ENCODE measurements at regions of chr1 and their contacts with region 1.

Region 1: DNA sequence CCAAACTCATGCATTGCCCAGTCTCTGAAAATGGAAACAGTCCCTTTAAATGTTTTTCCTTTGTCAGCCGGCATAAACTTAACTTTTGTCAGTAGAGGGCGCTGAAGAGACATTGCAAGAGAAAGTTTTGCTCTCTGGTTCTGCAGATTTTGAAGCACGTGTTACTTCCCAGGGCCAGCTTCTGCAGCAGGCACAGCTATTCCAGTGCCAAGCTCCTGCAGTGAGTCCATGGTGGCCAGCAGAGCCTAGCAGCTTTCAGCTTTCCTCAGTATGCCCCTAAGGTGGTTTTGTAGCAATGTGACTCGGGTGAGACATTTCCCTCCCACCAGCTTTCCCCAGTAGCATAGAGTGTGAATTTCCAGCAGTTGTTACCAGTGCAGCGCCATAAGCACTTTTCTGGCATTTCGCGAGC is 2.6 kb upstream of the IFI44L start:
- DNase-seq: peak; percentile 73 to 80 (median 78)
- H3K4me3 ChIP-seq: no peak overlapping the region
- H3K4me3 Mint-ChIP-seq: peak overlapping the region in 6 of 8 donors; percentile 27 to 74 (median 40)
- H3K27ac ChIP-seq: no peak overlapping the region
- H3K27ac Mint-ChIP-seq: peak overlapping the region in 6 of 7 donors; percentile 24 to 88 (median 70)
- H3K4me1 ChIP-seq: peaks cover 43% of the 10 kb centered on the region
- H3K4me1 Mint-ChIP-seq: peaks cover 33 to 45% (median 39%) of the 10 kb centered on the region in 4 donors
- H3K27me3 ChIP-seq: no peaks in the 10 kb centered on the region
- H3K27me3 Mint-ChIP-seq: no peaks in the 10 kb centered on the region

Region 2: DNA sequence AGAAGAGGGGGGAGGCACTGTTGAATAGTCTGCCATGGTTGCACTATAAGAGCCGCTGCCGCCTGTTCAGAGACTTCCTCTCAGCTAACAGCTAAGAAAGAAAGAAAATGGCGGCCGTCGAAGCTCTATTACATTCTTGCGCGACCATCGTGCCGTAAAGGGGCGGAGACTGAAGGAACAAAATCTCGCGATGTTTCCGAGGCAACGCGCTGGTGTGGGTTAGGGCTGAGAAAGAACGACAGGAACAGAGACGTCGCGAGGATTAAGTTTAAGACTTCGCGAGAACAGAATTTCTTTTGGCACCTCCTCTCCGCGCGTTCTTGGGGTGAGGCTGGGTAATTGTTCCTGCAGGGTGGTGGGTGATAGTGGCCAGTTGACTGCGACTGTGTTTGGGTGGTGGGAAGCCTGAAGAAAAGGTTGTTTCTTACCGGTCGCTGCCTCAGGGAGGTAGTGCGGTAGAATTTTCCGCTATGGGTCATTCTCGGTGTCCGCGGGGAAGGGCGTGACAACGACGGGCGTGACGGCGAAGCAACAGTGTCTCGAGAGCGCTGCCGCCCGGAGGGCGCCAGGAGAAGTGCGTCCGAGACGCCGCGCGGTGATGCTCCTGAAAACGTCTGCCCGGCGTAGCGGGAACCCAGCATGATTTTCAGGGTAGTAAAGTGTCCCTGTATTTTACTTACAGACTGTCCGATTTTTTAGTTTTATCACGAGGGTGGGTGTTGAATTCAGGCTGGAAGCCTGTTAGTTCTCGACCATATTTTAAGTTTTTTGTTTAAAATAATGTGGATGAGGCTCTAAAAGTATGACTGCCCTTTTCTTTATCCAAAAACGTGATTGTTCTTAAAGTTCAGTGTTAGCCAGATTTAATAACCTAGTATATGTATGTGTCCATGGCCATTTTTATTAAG is 638.4 kb before region 1 on chr1 and contains the start of gene FUBP1:
- CTCF ChIA-PET with region 1: no interaction called
- POLR2A ChIA-PET with region 1: interaction called, 4 read pairs
- intact Hi-C with region 1: loop called (anchors 10 kb)
- DNase-seq: peak; percentile 95 to 98 (median 97)
- H3K4me3 ChIP-seq: peak within 1 kb of the TSS; percentile 74 to 94
- H3K4me3 Mint-ChIP-seq: no peak within 1 kb of the TSS
- H3K27ac ChIP-seq: peak within 1 kb of the TSS; percentile 100
- H3K27ac Mint-ChIP-seq: no peak within 1 kb of the TSS
- H3K4me1 ChIP-seq: peaks cover 55% of the 10 kb centered on the region
- H3K4me1 Mint-ChIP-seq: peaks cover 22 to 39% (median 30%) of the 10 kb centered on the region in 4 donors
- H3K27me3 ChIP-seq: no peaks in the 10 kb centered on the region
- H3K27me3 Mint-ChIP-seq: no peaks in the 10 kb centered on the region
- total RNA-seq, gene FUBP1: 246 to 270 TPM

Region 3: DNA sequence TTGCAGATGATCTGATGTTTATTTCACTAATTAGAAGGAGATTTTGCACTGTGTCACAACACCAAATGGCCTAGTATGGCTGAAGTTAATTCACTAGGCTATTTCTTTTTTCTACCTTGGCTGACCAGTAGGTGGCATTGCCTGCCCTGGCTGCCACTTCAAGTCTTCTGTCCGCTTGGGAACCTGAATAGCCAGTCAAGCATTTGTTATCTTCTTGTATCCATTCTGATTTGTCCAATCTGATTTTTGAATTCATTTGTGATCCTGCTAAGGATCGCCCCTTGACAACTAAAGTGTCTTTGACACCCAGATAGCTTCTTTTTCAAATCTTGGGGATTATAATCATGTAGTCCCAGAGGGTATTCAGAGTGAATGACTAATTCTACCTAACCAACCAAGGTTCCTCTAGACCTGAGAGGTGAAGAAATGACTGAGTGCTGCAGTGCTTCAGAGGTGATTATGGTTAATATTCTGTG is 472.5 kb before region 1 on chr1:
- CTCF ChIA-PET with region 1: interaction called, 6 read pairs
- POLR2A ChIA-PET with region 1: no interaction called
- intact Hi-C with region 1: loop called (anchors 5 kb)
- DNase-seq: peak in 4 of 5 donors; percentile 29 to 36 (median 32)
- H3K4me3 ChIP-seq: no peak overlapping the region
- H3K4me3 Mint-ChIP-seq: peak overlapping the region in 1 of 8 donors; percentile 50
- H3K27ac ChIP-seq: no peak overlapping the region
- H3K27ac Mint-ChIP-seq: no peak overlapping the region
- H3K4me1 ChIP-seq: peaks cover 11% of the 10 kb centered on the region
- H3K4me1 Mint-ChIP-seq: peaks cover 8 to 35% (median 12%) of the 10 kb centered on the region in 4 donors
- H3K27me3 ChIP-seq: no peaks in the 10 kb centered on the region
- H3K27me3 Mint-ChIP-seq: peaks cover 9 to 13% of the 10 kb centered on the region in 2 donors

Region 4: DNA sequence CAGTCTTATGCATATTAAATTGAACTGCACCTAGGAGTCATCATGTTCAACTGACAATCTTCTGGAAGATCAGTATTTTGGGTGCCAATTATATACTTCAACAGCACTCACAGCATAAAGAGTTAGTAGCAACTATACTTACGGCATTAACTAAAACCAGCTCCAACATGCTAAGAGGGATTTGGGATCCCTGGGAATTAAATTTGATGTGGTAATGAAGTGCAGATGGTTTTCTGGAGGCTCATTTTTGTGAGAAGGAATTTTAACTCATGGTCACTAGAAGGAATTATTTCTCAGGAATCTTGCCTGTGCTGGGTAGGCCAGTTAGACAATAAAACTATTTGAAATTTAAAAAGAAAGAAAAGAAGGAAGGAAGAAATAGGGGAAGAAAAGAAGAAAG is 50.3 kb after region 1 on chr1:
- CTCF ChIA-PET with region 1: interaction called, 107 read pairs
- POLR2A ChIA-PET with region 1: interaction called, 7 read pairs
- intact Hi-C with region 1: no loop called
- DNase-seq: no peak
- H3K4me3 ChIP-seq: no peak overlapping the region
- H3K4me3 Mint-ChIP-seq: no peak overlapping the region
- H3K27ac ChIP-seq: no peak overlapping the region
- H3K27ac Mint-ChIP-seq: no peak overlapping the region
- H3K4me1 ChIP-seq: no peaks in the 10 kb centered on the region
- H3K4me1 Mint-ChIP-seq: peaks cover 0 to 22% (median 5%) of the 10 kb centered on the region in 4 donors
- H3K27me3 ChIP-seq: no peaks in the 10 kb centered on the region
- H3K27me3 Mint-ChIP-seq: no peaks in the 10 kb centered on the region

Region 5: GRCh38 chr1:78682496-78682895 is 64.9 kb after region 1 on chr1:
- CTCF ChIA-PET with region 1: interaction called, 34 read pairs
- POLR2A ChIA-PET with region 1: no interaction called
- intact Hi-C with region 1: no loop called
- DNase-seq: no peak
- H3K4me3 ChIP-seq: no peak overlapping the region
- H3K4me3 Mint-ChIP-seq: no peak overlapping the region
- H3K27ac ChIP-seq: no peak overlapping the region
- H3K27ac Mint-ChIP-seq: no peak overlapping the region
- H3K4me1 ChIP-seq: no peaks in the 10 kb centered on the region
- H3K4me1 Mint-ChIP-seq: peaks cover 0 to 4% (median 1%) of the 10 kb centered on the region in 4 donors
- H3K27me3 ChIP-seq: no peaks in the 10 kb centered on the region
- H3K27me3 Mint-ChIP-seq: peaks cover 3 to 9% of the 10 kb centered on the region in 2 donors

Region 6: GRCh38 chr1:78726686-78727085 is 109.1 kb after region 1 on chr1:
- CTCF ChIA-PET with region 1: no interaction called
- POLR2A ChIA-PET with region 1: no interaction called
- intact Hi-C with region 1: no loop called
- DNase-seq: no peak
- H3K4me3 ChIP-seq: no peak overlapping the region
- H3K4me3 Mint-ChIP-seq: no peak overlapping the region
- H3K27ac ChIP-seq: no peak overlapping the region
- H3K27ac Mint-ChIP-seq: no peak overlapping the region
- H3K4me1 ChIP-seq: no peaks in the 10 kb centered on the region
- H3K4me1 Mint-ChIP-seq: no peaks in the 10 kb centered on the region
- H3K27me3 ChIP-seq: no peaks in the 10 kb centered on the region
- H3K27me3 Mint-ChIP-seq: peaks cover 0 to 6% of the 10 kb centered on the region in 2 donors

Measured in CD4-positive, alpha-beta memory T cell (primary cell).